Right cardiac atrium (tissue), 5 donors: ENCODE measurements at regions of chr16 and their contacts with region 1.

Region 1: DNA sequence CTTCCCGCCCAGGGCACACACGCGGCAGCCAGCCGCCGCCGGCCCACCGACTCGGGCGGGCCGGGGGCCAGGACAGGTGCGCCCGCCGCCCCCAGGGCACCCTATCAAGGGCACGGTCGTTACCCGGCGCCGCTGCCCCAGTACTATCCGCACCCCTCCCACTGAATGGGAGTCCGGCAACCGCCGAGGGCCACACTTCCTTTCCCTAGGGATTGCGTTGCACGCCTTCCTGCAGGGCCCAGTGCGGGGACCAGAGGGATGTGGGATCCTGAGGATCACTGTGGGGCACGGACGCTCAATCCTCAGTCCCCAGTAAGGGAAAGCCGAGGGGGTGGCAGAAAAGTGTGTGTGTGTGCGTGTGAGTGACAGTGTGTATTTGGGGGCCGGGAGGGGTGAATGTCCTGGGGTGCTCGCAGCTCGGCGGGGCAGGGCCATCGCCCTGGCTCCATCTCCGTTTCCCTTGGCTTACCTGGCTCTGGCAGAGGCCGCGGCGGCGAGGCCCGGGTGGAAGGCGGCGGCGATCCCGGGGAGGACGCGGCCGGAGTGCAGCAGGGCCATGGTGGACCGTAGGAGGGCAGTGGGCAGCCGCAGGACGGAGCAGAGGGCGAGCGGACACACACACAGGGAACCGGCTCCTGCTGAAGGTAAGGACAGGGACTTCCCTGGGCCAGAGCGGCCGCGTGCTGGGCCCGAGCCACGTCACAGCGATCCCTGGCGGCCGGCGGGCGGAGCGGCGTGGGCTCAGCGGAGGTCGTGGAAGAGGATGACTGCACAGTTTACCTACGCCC is at the start of gene GOT2:
- DNase-seq: peak; percentile 84 to 93 (median 92)
- ATAC-seq: peak; percentile 97 to 98
- H3K4me3 ChIP-seq: peak within 1 kb of the TSS; percentile 71
- H3K27ac ChIP-seq: peak within 1 kb of the TSS; percentile 86
- H3K4me1 ChIP-seq: no peaks in the 10 kb centered on the region
- H3K27me3 ChIP-seq: no peaks in the 10 kb centered on the region
- total RNA-seq, gene GOT2: 245 to 329 (median 314) TPM

Region 2: DNA sequence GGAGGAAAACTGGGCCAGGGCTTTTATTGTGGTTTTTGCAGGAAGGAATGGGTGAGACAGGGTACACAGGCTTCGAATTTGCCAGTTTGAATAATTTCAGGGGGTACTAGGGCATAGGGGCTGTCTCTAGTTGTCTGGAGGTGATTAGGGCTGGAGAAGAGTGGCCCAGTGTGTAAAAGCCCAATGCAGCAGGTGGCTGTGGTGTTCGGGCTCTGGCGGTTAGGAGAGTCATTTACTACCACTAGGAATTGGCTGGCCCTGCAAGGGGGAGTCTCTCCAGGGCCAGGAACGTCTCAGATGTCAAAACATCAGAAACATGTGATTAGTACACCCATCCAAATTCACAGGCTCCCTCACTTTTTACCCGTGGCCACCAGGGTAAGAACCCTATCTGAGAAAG is 291.3 kb before region 1 on chr16:
- intact Hi-C with region 1: no loop called
- DNase-seq: no peak
- ATAC-seq: peak; percentile 20 to 24
- H3K4me3 ChIP-seq: no peak overlapping the region
- H3K27ac ChIP-seq: no peak overlapping the region
- H3K4me1 ChIP-seq: no peaks in the 10 kb centered on the region
- H3K27me3 ChIP-seq: no peaks in the 10 kb centered on the region

Region 3: DNA sequence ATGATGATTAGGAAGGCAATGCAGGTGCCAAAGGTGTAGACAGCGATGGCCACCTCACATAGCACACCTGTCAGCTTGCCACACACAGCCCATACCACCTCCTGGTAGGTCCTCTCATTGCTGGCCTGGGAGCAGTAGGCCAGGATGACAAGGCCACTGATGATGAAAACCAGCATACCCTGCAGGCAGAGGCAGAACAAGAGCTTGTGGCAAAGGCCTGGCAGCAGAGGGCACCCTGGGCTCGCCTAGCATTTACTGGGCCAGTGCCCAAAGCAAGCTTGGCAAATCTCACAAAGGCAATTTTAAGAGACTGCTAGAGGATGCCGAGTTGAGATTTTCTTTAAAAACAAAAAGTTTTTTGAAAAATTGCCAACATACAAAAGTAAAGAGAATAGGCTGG is 55.1 kb before region 1 on chr16:
- intact Hi-C with region 1: loop called in 2 of 4 experiments (anchors 10 kb)
- DNase-seq: no peak
- ATAC-seq: peak; percentile 10 to 40
- H3K4me3 ChIP-seq: no peak overlapping the region
- H3K27ac ChIP-seq: no peak overlapping the region
- H3K4me1 ChIP-seq: peaks cover 4% of the 10 kb centered on the region
- H3K27me3 ChIP-seq: no peaks in the 10 kb centered on the region

Region 4: GRCh38 chr16:58684354-58685083 is 49.3 kb before region 1 on chr16 and contains the start of gene SLC38A7:
- intact Hi-C with region 1: loop called in 2 of 4 experiments (anchors 10 kb)
- DNase-seq: peak; percentile 91 to 96 (median 95)
- ATAC-seq: peak; percentile 95 to 96
- H3K4me3 ChIP-seq: peak within 1 kb of the TSS; percentile 87
- H3K27ac ChIP-seq: peak within 1 kb of the TSS; percentile 83
- H3K4me1 ChIP-seq: peaks cover 6% of the 10 kb centered on the region
- H3K27me3 ChIP-seq: no peaks in the 10 kb centered on the region
- total RNA-seq, gene SLC38A7: 16.5 to 21.3 (median 19.0) TPM